Activated CD4-positive, alpha-beta T cell treated with anti-CD3 and anti-CD28 coated beads for 36 hours (primary cell): ENCODE measurements at regions of chr6 and their contacts with region 1.

Region 1: DNA sequence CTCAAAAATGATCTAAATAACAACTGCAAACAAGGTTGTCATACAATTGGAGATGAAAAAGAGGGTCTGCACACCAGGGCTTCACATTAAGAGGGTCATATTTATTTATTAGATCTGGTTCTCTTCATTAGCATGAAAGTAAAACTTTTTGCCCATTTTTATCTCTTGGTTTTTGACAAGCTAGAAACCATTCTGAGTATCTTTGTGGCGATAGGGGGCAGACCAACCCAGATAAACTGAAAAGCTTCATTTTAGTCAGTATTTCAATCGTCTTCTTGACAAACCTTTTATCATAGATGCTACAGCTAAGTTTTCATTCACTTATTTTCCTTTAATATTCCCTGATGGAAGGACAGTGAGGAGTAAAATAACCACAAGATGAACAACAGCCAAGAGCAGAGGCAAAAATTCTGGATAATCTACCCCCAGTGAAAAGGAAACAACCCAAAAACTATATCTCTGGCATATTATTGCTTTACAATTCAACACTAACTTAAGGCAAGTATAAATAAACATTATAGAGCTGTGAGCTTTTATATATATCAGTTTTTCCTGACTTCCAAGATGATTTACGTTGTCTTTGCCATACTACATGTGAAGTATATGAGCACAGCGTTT is 45.2 kb downstream of the THEMIS start:
- DNase-seq: peak; percentile 68
- ATAC-seq: peak; percentile 60
- H3K4me3 Mint-ChIP-seq: peak overlapping the region; percentile 39
- H3K27ac Mint-ChIP-seq: peak overlapping the region; percentile 69
- H3K4me1 Mint-ChIP-seq: peaks cover 70% of the 10 kb centered on the region
- H3K27me3 Mint-ChIP-seq: no peaks in the 10 kb centered on the region

Region 2: GRCh38 chr6:127420556-127420955 is 435.1 kb before region 1 on chr6:
- CTCF ChIA-PET with region 1: no interaction called
- POLR2A ChIA-PET with region 1: no interaction called
- intact Hi-C with region 1: no loop called
- DNase-seq: peak; percentile 89
- ATAC-seq: peak; percentile 99
- H3K4me3 Mint-ChIP-seq: peak overlapping the region; percentile 28
- H3K27ac Mint-ChIP-seq: peak overlapping the region; percentile 75
- H3K4me1 Mint-ChIP-seq: peaks cover 23% of the 10 kb centered on the region
- H3K27me3 Mint-ChIP-seq: no peaks in the 10 kb centered on the region

Region 3: DNA sequence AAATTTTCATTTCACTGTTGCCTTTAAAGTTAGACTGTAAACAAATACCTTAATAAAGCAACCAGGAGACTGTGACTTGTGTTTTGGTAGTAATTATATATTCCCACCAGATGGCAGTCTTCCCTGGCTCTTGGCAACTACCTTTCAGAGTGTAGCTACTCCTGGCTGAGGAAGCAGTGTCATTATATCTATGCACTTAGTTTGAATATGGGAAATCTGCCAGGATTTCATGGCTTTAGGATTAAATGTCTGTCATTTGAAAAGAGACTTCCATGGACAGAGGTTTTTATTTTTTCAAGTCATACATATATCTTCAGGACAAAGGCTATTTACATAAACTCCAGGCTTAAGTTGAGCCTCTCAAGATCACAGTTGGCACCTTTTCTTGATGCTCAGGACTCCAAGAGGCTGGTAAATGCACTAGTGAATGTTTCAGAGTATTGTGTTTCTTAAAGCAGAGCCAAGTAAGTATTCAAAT is 118.6 kb before region 1 on chr6:
- CTCF ChIA-PET with region 1: interaction called, 28 read pairs
- POLR2A ChIA-PET with region 1: no interaction called
- intact Hi-C with region 1: loop called (anchors 1 to 2 kb)
- DNase-seq: peak; percentile 42
- ATAC-seq: peak; percentile 90
- H3K4me3 Mint-ChIP-seq: no peak overlapping the region
- H3K27ac Mint-ChIP-seq: peak overlapping the region; percentile 29
- H3K4me1 Mint-ChIP-seq: peaks cover 44% of the 10 kb centered on the region
- H3K27me3 Mint-ChIP-seq: no peaks in the 10 kb centered on the region

Region 4: GRCh38 chr6:127833336-127833735 is 22.3 kb before region 1 on chr6:
- CTCF ChIA-PET with region 1: interaction called, 21 read pairs
- POLR2A ChIA-PET with region 1: no interaction called
- intact Hi-C with region 1: no loop called
- DNase-seq: no peak
- ATAC-seq: no peak
- H3K4me3 Mint-ChIP-seq: no peak overlapping the region
- H3K27ac Mint-ChIP-seq: no peak overlapping the region
- H3K4me1 Mint-ChIP-seq: peaks cover 45% of the 10 kb centered on the region
- H3K27me3 Mint-ChIP-seq: no peaks in the 10 kb centered on the region

Region 5: DNA sequence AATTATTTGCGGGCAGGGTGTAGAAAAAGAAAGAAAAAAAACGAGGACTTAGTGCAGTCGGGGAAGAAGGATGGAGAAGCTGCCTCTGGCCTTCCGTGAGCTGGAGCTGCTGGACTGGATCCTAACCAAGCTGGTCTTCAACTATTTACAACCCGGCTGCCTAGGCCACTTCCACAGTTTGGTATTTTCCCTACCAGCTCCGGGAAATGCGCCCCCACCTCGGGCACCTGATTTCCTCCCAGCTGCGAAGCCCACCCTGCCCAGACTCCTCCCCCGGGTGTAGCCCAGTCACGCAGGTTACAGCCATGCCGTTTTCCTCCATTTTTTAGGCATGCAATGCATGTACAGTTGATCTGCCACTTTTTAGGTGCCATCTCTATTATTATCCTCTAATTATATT is 24.0 kb after region 1 on chr6:
- CTCF ChIA-PET with region 1: interaction called, 23 read pairs
- POLR2A ChIA-PET with region 1: no interaction called
- intact Hi-C with region 1: no loop called
- DNase-seq: peak; percentile 47
- ATAC-seq: peak; percentile 13
- H3K4me3 Mint-ChIP-seq: peak overlapping the region; percentile 65
- H3K27ac Mint-ChIP-seq: peak overlapping the region; percentile 76
- H3K4me1 Mint-ChIP-seq: peaks cover 78% of the 10 kb centered on the region
- H3K27me3 Mint-ChIP-seq: no peaks in the 10 kb centered on the region

Region 6: DNA sequence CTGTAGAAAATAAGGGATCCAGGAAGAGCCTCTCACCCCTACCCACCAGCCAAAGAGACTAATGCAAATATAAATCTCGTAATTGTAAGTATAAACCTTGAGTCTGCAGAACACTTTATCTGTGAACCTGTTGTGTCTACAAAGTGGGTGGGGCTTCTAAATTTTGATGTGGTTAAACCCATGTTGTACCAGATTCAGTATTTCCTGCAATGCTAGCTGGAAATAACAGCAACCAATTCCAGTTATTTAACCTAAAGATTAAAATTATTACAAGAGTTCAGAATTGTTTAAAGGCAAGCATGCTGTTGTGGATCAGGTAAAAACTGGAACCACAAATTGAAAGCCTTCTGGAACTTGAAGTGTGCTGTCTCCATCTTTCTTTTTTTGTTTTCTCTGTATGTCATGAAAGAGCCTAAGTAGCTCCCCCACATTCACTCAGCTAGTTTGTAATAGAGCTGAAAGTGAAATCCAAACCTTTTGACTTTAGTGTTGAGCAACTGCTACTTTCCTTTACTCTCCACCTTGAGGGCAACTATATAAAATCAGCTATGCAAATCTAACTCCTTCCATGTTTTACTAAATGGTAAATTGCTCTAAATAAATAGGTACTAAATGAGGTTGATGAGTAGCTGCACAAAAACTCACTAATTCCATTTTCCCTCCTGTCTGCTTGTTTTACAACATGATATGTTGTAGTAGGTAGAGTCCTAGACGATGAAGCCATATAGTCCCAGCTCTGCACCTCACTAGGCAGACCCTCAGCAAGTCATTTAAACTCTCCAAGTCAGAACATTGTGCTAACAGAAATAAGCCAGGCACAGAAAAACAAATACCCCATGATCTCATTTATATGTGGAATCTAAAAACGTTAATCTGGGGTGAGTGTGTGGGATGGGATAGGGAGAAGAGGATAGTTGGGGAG is 63.1 kb after region 1 on chr6:
- CTCF ChIA-PET with region 1: interaction called, 12 read pairs
- POLR2A ChIA-PET with region 1: no interaction called
- intact Hi-C with region 1: no loop called
- DNase-seq: no peak
- ATAC-seq: peak; percentile 88
- H3K4me3 Mint-ChIP-seq: peak overlapping the region; percentile 55
- H3K27ac Mint-ChIP-seq: peak overlapping the region; percentile 85
- H3K4me1 Mint-ChIP-seq: peaks cover 86% of the 10 kb centered on the region
- H3K27me3 Mint-ChIP-seq: no peaks in the 10 kb centered on the region

Region 7: GRCh38 chr6:128259730-128260685 is 404.4 kb after region 1 on chr6:
- CTCF ChIA-PET with region 1: no interaction called
- POLR2A ChIA-PET with region 1: no interaction called
- intact Hi-C with region 1: loop called in 1 of 2 experiments (anchors 10 kb)
- DNase-seq: no peak
- ATAC-seq: peak; percentile 54
- H3K4me3 Mint-ChIP-seq: peak overlapping the region; percentile 62
- H3K27ac Mint-ChIP-seq: peak overlapping the region; percentile 51
- H3K4me1 Mint-ChIP-seq: peaks cover 29% of the 10 kb centered on the region
- H3K27me3 Mint-ChIP-seq: no peaks in the 10 kb centered on the region

Region 8: GRCh38 chr6:128731249-128732165 is 875.9 kb after region 1 on chr6:
- CTCF ChIA-PET with region 1: no interaction called
- POLR2A ChIA-PET with region 1: no interaction called
- intact Hi-C with region 1: loop called (anchors 1 to 2 kb)
- DNase-seq: peak; percentile 5
- ATAC-seq: no peak
- H3K4me3 Mint-ChIP-seq: no peak overlapping the region
- H3K27ac Mint-ChIP-seq: no peak overlapping the region
- H3K4me1 Mint-ChIP-seq: no peaks in the 10 kb centered on the region
- H3K27me3 Mint-ChIP-seq: peaks cover 18% of the 10 kb centered on the region